Prostate gland (tissue), 2 donors: ENCODE measurements at regions of chr10 and their contacts with region 1.

Region 1: DNA sequence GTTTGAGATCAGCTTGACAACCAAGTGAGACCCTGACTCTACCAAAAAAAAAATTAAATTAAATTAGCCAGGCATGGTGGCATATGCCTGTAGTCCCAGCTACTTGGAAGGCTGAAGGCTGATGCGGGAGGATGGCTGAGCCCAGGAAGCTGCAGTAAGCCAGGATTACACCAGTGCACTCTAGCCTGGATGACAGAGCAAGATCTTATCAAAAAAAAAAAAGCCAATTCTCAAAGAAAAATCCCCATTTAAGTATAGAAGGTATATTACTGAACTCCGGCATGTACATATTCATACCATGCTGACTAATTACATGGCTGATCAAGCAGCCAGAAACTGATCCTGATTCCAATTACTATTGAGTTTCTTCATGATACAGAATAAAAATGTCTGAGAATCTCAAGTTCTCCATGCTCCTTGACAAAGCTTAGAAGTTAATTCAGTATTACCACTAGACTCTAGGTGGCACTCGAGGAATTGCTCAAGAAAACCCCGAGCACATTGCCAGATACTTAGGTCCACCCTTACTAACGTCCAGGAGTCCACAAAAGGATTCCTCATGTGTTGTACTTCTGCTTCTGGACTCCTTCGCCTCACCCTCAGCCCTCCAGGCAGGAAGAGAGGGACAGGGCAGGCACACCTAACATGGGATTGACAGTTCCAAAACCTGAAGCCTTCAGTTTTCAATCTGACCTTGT is 148.9 kb downstream of the PARD3 start:
- DNase-seq: peak; percentile 63
- H3K4me3 ChIP-seq: no peak overlapping the region
- H3K27ac ChIP-seq: no peak overlapping the region
- H3K4me1 ChIP-seq: no peaks in the 10 kb centered on the region
- H3K27me3 ChIP-seq: no peaks in the 10 kb centered on the region
- CTCF ChIP-seq: peak; percentile 19 to 78 (median 62)
- POLR2A ChIP-seq: no peak

Region 2: GRCh38 chr10:34723750-34724149 is 57.6 kb after region 1 on chr10:
- intact Hi-C with region 1: loop called (anchors 10 kb)
- DNase-seq: peak; percentile 33
- H3K4me3 ChIP-seq: no peak overlapping the region
- H3K27ac ChIP-seq: no peak overlapping the region
- H3K4me1 ChIP-seq: peaks cover 4% of the 10 kb centered on the region
- H3K27me3 ChIP-seq: no peaks in the 10 kb centered on the region
- CTCF ChIP-seq: peak; percentile 11 to 54 (median 44)
- POLR2A ChIP-seq: no peak

Region 3: DNA sequence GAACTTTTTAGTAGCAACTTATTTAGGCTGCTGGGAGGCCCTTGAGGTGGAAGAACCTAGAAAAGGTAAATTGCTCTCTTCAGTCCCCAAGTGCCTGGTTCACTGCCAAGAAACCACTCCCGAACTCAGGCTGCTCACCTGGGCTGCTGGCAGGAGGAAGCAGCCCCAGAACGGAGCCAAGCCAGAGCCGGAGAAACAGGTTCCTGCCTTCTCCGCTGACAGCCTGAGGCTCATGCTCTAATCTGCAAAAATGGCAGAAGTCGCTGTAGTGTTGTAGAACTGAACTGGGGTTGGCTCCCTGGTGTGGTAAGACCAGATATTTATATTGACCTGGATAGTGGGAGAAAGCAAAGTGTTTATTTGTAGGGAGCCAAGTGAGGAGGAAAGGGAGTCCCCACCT is 288.0 kb after region 1 on chr10:
- intact Hi-C with region 1: loop called (anchors 10 kb)
- DNase-seq: peak; percentile 95
- H3K4me3 ChIP-seq: no peak overlapping the region
- H3K27ac ChIP-seq: peak overlapping the region; percentile 8 to 9
- H3K4me1 ChIP-seq: no peaks in the 10 kb centered on the region
- H3K27me3 ChIP-seq: no peaks in the 10 kb centered on the region
- CTCF ChIP-seq: no peak
- POLR2A ChIP-seq: no peak

Region 4: GRCh38 chr10:35027567-35027966 is 361.4 kb after region 1 on chr10:
- intact Hi-C with region 1: loop called (anchors 10 kb)
- DNase-seq: no peak
- H3K4me3 ChIP-seq: no peak overlapping the region
- H3K27ac ChIP-seq: no peak overlapping the region
- H3K4me1 ChIP-seq: no peaks in the 10 kb centered on the region
- H3K27me3 ChIP-seq: no peaks in the 10 kb centered on the region
- CTCF ChIP-seq: peak in 3 of 4 experiments; percentile 26 to 46 (median 31)
- POLR2A ChIP-seq: no peak

Region 5: DNA sequence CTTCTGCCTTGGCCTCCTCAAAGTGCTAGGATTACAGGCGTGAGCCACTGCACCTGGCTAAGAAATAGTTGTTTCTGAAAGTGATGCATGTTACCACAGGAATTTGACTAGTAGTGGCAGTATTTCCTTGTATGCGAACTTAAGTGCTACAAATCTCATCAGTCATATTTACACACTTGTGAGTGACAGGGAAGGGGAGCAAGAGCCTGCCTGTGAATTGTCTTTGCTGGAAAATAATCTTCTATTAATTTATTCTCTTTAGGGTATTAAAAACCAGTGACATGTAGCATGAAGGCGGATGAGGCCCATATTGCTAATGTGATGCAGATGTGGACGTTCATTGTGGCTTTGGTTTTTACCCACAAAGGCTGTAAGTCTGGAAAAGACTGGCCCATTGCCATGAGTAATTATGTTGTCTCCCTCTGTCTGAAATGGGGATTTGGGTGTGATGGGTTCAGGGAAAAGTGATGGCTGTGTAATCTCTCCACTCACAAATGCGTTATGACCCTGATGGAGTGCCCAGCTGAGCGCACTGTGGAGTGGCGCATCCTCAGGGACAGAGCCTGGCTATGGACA is 767.8 kb after region 1 on chr10:
- intact Hi-C with region 1: no loop called
- DNase-seq: no peak
- H3K4me3 ChIP-seq: no peak overlapping the region
- H3K27ac ChIP-seq: no peak overlapping the region
- H3K4me1 ChIP-seq: no peaks in the 10 kb centered on the region
- H3K27me3 ChIP-seq: no peaks in the 10 kb centered on the region
- CTCF ChIP-seq: no peak
- POLR2A ChIP-seq: no peak

Region 6: DNA sequence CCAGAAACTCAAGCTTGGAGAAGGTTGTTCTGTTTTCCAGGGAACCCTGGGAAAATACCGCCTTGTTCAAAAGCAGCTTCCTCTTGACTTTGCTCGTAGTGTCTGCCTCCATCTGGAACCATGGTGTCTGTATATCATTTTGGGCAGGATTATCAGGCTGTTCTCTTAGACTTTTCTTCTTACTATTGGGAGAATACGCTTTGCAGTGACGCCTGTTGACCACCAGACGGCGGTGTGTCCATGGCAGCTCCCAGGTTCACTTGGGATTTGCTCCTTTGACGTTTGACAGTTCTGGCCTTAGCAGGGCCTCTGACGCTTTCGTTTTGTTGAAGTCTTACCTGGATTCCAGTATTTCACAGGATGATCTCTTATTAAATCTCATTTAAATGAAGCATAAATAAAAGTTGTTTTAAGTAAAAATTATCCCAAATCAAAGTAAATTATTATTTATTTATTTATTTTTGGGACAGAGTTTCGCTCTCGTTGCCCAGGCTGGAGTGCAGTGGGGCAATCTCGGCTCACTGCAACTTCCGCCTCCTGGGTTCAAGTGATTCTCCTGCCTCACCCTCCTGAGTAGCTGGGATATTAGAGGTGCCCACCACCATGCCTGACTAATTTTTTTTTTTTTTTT is 897.2 kb after region 1 on chr10:
- intact Hi-C with region 1: no loop called
- DNase-seq: peak; percentile 21
- H3K4me3 ChIP-seq: no peak overlapping the region
- H3K27ac ChIP-seq: no peak overlapping the region
- H3K4me1 ChIP-seq: no peaks in the 10 kb centered on the region
- H3K27me3 ChIP-seq: no peaks in the 10 kb centered on the region
- CTCF ChIP-seq: peak; percentile 57 to 76 (median 68)
- POLR2A ChIP-seq: no peak